ENCODE measurements at regions of chr3 and their contacts with region 1.

Region 1: DNA sequence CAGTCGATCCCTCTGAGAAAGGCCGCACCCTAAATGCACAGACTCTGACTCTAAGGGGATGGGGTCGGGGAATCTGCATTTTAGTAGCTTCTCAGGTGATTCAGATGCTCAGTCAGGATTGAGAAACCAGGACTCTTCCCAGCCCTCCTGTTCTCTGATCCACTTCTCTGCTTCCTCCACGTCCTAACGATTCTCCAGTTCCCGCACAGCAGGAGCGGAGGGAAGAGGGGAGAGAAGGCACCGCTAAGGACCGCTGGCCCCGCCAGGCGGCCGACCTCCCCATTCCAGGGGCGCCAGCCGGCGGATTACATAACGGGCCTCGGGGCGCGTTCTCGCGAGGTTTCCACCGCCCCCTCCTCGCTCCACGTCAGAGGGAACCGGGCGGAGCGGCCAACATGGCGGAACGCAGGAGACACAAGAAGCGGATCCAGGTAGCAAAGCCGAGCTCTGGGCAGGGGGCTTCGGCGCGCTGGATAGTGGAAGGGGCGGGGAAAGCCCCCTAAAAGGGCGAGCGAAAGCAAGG is at the start of gene SEC62:
- DNase-seq: peak; percentile 91 to 97
- ATAC-seq: peak; percentile 98 to 99 (median 99)
- H3K4me3 ChIP-seq: peak within 1 kb of the TSS; percentile 86
- H3K27ac ChIP-seq: peak within 1 kb of the TSS; percentile 91
- H3K4me1 ChIP-seq: peaks cover 40% of the 10 kb centered on the region
- H3K27me3 ChIP-seq: no peaks in the 10 kb centered on the region
- CTCF ChIP-seq: peak; percentile 36
- total RNA-seq, gene SEC62: 61.5 to 78.2 (median 71.5) TPM

Region 2: DNA sequence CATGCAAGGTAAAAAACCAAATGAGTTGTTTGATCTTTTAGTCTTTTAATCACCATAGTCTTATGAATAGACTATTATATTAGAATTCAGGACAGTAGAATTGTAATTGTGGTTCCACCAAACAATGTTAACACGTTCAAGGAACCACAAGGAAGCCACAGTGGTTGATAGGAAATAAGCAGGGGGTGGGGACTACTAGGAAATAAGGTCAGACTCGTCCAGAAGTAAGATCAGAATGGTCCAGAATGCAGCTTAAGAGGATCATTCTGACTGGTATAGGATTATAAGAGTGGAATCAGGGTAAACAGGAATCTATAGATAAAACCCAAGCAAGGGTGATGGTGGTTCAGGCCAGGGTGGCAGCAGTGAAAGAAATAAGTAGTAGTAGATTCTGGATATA is 185.7 kb before region 1 on chr3:
- intact Hi-C with region 1: loop called in 1 of 2 experiments (anchors 5 kb)
- DNase-seq: no peak
- ATAC-seq: no peak
- H3K4me3 ChIP-seq: no peak overlapping the region
- H3K27ac ChIP-seq: no peak overlapping the region
- H3K4me1 ChIP-seq: peaks cover 13% of the 10 kb centered on the region
- H3K27me3 ChIP-seq: no peaks in the 10 kb centered on the region
- CTCF ChIP-seq: no peak

Region 3: DNA sequence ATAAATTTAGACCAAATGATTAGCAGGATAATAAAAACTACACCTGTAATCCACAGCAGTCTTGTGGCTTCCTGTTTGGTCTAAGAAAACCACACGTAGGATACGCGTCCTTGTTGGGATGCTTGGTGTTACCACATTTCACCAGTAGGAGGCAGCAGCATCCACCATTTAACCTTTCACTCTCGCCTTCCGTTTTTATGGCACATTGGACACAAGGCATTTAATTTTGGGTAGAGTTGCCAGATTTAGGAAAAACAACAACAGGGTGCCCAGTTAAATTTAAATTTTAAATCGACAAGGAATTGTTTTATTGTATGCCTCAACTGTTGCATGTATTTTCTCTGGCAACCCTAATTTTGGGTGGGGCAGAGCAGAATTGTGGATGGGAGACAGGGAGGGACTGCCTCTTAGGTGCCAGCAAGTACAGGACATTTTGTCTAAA is 103.0 kb before region 1 on chr3:
- intact Hi-C with region 1: loop called in 1 of 2 experiments (anchors 5 kb)
- DNase-seq: peak in 1 of 2 donors; percentile 23
- ATAC-seq: peak; percentile 63 to 71 (median 68)
- H3K4me3 ChIP-seq: no peak overlapping the region
- H3K27ac ChIP-seq: no peak overlapping the region
- H3K4me1 ChIP-seq: no peaks in the 10 kb centered on the region
- H3K27me3 ChIP-seq: peaks cover 0 to 1% (median 0%) of the 10 kb centered on the region in 3 donors
- CTCF ChIP-seq: peak; percentile 87

Measured in psoas muscle (tissue), 8 donors.